ENCODE measurements at regions of chr16 and their contacts with region 1.

Region 1: DNA sequence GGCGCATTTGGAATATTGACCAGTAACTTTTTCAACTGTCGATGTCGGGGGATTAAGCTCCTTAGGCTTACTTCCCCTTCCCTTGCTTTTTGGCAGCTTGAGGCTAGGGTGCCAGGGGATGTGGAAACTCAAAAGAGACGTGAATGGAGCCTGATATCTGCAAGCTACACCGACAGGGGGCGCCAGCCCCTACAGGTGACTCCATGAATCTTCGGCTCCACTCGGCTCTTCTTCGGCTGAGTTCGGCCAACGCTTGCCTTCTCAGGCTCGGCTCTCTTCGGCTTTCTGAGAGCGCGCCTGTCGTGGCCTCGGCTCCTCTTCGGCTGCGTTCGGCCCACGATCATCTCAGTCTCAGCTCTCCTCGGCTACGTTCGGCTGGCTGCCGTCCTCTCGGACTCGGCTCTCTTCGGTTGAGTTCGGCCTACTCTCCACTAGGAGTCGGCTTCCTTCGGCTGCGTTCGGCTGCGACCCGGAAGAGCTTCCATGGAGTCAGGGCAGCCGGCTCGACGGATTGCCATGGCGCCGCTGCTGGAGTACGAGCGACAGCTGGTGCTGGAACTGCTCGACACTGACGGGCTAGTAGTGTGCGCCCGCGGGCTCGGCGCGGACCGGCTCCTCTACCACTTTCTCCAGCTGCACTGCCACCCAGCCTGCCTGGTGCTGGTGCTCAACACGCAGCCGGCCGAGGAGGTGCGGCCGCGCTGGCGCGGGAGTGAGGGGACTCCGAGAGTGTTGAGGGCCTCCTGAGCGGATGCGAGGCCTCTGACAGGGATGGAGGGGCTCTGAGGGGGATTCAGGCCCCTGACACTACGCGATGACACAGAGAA is at the start of gene ERCC4:
- DNase-seq: peak; percentile 99
- H3K4me3 Mint-ChIP-seq: peak within 1 kb of the TSS; percentile 92
- H3K27ac Mint-ChIP-seq: peak within 1 kb of the TSS; percentile 53
- H3K4me1 Mint-ChIP-seq: peaks cover 21% of the 10 kb centered on the region
- H3K27me3 Mint-ChIP-seq: no peaks in the 10 kb centered on the region
- total RNA-seq, gene ERCC4: 11.0 to 14.1 TPM

Region 2: GRCh38 chr16:13866073-13866472 is 53.8 kb before region 1 on chr16:
- CTCF ChIA-PET with region 1: interaction called, 6 read pairs
- POLR2A ChIA-PET with region 1: no interaction called
- intact Hi-C with region 1: loop called (anchors 1 kb)
- DNase-seq: peak; percentile 59
- H3K4me3 Mint-ChIP-seq: no peak overlapping the region
- H3K27ac Mint-ChIP-seq: no peak overlapping the region
- H3K4me1 Mint-ChIP-seq: no peaks in the 10 kb centered on the region
- H3K27me3 Mint-ChIP-seq: peaks cover 13% of the 10 kb centered on the region

Region 3: DNA sequence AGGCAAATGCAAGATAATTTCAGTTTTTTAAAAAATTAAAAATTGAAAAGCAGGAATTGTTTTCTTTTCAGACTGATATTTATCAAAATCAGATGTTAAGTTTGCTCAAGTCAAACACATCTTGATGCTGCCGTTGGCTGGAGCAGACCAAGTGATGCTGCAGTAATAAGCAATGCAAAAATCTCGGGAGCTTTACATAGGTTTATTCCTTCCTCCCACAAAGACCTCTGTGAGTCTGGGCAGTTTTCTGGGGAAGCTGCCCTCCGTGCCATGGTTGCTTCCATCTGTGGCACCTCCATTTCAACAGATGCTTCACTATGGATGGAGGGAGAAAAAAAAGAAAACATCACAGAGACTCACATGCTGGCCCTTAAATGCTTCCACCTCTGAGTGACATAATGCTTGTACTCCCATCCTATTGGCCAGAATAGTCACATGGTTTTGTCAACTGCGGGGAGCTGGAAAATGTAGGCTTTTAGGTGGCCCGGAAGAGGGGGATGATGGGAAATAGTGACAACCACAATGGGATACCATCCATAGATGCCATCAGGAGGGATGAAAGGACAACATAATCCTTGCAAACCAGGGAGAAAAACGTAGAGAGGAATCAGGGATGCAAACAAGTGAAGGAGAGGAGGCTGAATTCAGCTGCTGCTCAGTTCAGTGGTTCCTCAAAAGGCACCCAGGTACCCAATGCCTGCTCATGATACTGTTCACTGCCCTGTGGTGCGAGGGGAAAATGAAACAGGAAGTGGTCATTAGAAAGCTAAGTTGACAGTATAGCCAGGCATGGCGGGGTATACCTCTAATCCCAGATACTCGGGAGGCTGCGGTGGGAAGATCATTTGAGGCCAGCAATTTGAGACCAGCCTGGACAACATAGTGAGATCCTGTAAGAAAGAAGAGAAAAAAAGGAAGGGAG is 13.5 kb before region 1 on chr16:
- CTCF ChIA-PET with region 1: interaction called, 26 read pairs
- POLR2A ChIA-PET with region 1: no interaction called
- intact Hi-C with region 1: no loop called
- DNase-seq: no peak
- H3K4me3 Mint-ChIP-seq: no peak overlapping the region
- H3K27ac Mint-ChIP-seq: no peak overlapping the region
- H3K4me1 Mint-ChIP-seq: no peaks in the 10 kb centered on the region
- H3K27me3 Mint-ChIP-seq: peaks cover 31% of the 10 kb centered on the region

Region 4: DNA sequence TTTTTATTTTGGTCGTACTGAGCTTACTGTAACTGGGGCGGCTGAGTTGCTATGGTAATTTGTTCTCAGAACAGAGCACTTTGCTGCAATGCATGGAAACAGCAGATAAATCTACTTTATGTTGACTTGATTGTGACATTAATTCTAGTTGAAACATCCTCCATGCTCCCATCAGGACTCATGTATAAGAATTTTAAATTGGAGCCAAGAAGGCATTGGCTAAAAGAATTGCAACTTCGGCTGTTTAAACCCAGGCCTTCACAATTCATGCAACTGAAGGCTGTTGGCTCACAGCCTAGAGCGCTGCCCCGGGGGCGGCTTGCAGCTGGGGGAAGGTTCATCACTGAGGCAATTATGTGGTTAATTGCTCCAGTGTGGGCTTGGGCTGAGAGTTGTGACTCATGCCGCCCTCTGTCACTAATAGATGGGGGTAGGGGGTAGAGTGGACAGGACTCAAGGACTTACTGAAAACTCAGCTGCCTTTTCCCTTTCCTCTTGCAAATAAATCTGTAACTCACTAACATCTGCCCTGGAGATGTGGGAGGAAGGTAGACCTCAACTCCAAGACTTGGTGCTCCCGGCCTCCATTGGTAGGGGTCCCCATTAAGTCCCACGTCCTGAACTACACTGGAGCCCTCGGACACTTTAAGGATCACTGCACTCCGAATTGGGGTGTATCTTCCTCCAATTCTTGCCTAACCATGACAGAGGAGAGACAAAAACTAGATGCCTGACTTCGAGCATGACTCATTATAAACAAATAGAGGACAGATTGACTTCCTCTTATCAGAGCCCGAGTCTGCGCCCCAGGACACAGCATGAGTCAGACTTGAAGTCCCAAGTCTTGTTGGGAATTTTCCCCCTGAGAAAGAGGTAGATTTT is 37.5 kb after region 1 on chr16:
- CTCF ChIA-PET with region 1: interaction called, 7 read pairs
- POLR2A ChIA-PET with region 1: no interaction called
- intact Hi-C with region 1: loop called (anchors 2 kb)
- DNase-seq: peak; percentile 56
- H3K4me3 Mint-ChIP-seq: peak overlapping the region; percentile 66
- H3K27ac Mint-ChIP-seq: peak overlapping the region; percentile 69
- H3K4me1 Mint-ChIP-seq: peaks cover 24% of the 10 kb centered on the region
- H3K27me3 Mint-ChIP-seq: peaks cover 17% of the 10 kb centered on the region

Region 5: DNA sequence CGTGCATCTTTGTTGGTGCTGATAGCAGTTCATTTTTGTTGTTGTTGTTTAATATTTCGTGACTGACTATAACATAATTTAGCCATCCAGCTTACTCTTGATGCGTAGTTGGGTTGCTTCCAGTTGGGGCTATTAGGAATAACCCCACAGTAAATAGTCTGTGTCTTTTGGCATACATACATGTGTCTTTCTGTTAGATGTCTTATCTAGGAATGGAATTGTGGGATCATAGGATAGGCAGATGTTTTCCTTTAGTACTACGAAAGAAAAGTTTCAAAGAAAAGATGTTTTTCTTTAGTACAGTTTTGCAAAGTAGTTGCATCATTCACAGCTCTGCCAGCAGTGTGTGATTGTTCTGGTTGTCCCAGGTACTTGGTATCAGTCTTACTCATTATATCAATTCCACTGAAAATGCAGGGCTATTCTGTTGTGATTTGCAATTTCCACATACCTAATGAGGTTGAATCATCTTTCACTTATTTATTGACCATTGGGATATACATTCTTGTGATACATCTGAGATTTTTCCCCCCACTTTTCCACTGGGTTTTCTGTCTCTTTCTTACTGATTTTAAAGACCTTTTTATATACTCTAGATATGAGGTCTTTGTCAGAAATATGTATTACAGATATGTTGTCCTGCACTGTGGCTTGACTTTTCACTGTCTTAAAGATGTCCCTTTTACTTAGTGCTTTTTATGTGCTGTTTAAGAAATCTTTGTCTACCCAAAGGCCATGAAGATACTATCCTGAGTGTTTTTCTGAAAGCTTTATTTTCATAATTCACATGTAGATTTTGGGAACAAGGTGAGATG is 324.5 kb after region 1 on chr16:
- CTCF ChIA-PET with region 1: interaction called, 24 read pairs
- POLR2A ChIA-PET with region 1: no interaction called
- intact Hi-C with region 1: loop called (anchors 5 kb)
- DNase-seq: no peak
- H3K4me3 Mint-ChIP-seq: no peak overlapping the region
- H3K27ac Mint-ChIP-seq: peak overlapping the region; percentile 78
- H3K4me1 Mint-ChIP-seq: peaks cover 8% of the 10 kb centered on the region
- H3K27me3 Mint-ChIP-seq: no peaks in the 10 kb centered on the region

Region 6: DNA sequence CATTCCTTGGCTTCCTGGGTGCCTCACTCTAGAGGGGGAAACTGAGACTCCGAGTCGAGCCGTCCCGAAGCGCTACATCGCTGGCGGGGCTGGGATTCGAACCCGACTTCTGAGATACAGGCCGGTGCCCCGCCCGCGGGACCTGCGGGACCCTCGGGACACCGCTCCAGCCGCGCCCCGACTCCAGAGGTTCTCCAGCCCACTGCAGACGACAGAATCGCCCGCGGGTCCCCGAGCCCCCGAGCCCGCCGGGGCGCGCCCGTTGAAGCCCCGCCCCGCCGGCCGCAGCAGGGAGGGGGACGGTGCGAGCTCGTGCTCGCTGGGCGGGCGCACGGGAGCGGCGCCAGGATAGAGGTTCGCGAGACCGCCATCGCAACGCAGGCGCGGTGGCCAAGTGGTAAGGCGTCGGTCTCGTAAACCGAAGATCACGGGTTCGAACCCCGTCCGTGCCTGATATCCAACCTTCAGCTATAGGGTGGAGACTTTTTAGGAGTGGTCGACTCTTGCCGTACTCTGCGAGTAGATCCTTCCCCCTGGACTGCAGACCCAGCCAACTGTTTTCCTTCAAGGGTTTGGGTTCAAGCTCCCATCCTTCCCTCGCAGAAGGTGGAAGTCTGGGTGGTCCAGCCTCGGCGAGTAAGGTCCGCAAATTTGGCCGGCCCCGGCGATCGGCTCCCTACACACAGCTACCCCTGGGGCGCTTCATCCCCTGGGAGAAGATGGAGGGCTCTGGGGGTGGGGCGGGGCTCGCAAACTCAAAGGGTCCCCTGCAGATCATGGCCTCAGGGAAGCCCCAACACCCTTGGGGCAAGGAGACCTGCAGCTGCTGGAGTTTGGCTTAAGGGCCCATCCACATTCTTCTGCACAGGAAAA is 365.9 kb after region 1 on chr16:
- CTCF ChIA-PET with region 1: interaction called, 22 read pairs
- POLR2A ChIA-PET with region 1: interaction called, 3 read pairs
- intact Hi-C with region 1: loop called (anchors 1 kb)
- DNase-seq: peak; percentile 96
- H3K4me3 Mint-ChIP-seq: peak overlapping the region; percentile 85
- H3K27ac Mint-ChIP-seq: peak overlapping the region; percentile 77
- H3K4me1 Mint-ChIP-seq: peaks cover 13% of the 10 kb centered on the region
- H3K27me3 Mint-ChIP-seq: no peaks in the 10 kb centered on the region

Region 7: GRCh38 chr16:14632692-14633569 is 713.0 kb after region 1 on chr16 and contains the start of gene BFAR:
- CTCF ChIA-PET with region 1: interaction called, 4 read pairs
- POLR2A ChIA-PET with region 1: no interaction called
- intact Hi-C with region 1: loop called (anchors 1 kb)
- DNase-seq: peak; percentile 99
- H3K4me3 Mint-ChIP-seq: peak within 1 kb of the TSS; percentile 100
- H3K27ac Mint-ChIP-seq: peak within 1 kb of the TSS; percentile 96
- H3K4me1 Mint-ChIP-seq: peaks cover 57% of the 10 kb centered on the region
- H3K27me3 Mint-ChIP-seq: no peaks in the 10 kb centered on the region
- total RNA-seq, gene BFAR: 46.5 to 51.4 TPM

Region 8: DNA sequence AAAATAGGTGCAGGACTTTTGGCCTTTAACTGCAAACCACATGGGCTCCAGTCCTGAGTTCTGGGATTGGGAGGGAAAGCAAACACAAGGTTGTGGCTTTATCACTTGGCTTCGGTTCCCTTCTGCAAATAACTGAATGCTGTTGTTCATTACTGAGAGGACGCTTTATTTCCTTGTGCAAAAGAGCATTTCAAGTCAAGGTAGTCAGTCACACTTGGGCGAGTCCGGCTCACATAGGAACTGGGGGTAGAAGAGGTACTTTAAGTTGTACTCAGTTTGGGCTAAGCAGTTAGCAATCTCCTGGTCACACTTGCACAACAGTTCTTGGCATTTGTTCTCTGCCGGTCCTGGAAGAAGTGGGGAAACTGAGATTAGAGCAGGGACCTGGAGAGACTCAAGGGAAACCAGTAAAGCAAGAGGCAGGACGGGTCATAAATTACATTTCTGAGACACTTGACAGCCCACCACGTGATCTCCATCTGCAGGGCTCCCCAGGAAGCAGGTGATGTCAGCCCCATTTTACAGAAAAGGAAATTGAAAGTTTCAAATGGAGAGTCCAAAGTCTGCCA is 752.6 kb after region 1 on chr16:
- CTCF ChIA-PET with region 1: no interaction called
- POLR2A ChIA-PET with region 1: no interaction called
- intact Hi-C with region 1: no loop called
- DNase-seq: peak; percentile 19
- H3K4me3 Mint-ChIP-seq: no peak overlapping the region
- H3K27ac Mint-ChIP-seq: no peak overlapping the region
- H3K4me1 Mint-ChIP-seq: peaks cover 4% of the 10 kb centered on the region
- H3K27me3 Mint-ChIP-seq: no peaks in the 10 kb centered on the region